ENCODE measurements at regions of chr9 and their contacts with region 1.

Region 1: DNA sequence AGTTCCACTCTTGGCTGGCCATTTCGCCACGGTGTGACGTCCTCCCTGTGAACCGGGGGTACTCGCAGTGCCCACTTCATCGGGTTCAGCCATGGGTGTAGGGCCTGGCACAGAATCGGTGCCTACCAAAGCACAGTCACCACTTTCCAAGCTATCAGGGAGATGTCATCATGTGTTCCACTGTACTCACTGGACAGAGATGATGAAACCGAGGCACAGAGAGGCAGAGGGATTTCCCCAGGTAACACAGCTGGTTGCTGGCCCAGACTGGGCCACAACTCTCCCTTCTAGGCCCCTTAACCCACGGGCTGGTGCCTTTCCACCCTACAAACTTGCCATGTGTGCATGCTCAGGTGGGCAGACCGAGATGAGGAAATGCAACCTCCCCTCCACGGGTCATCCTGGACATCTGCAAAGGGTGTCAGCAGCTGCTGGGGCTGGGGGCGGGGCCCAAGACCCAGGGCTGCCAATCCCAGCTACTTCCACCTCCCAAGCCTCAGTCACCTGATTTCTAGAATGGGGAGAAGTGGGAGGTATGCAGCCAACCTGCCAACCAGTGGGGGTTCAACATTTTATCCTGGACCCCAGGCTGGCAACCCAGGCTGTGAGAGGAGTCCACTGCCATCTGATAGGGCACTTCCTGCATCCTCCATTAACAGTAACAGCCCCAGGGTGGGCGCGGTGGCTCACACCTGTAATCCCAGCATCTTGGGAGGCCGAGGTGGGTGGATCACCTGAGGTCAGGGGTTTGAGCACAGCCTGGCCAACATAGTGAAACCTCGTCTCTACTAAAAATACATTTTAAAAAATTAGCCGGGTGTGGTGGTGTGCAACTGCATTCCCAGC is 893 bp upstream of the SH2D3C start:
- DNase-seq: peak; percentile 80
- ATAC-seq: peak; percentile 50
- H3K4me3 ChIP-seq: peak overlapping the region; percentile 24 to 91 (median 69)
- H3K4me3 Mint-ChIP-seq: peak overlapping the region; percentile 100
- H3K27ac ChIP-seq: peak overlapping the region; percentile 89 to 97
- H3K27ac Mint-ChIP-seq: peak overlapping the region; percentile 97
- H3K4me1 ChIP-seq: peaks cover 43 to 82% of the 10 kb centered on the region in 2 donors
- H3K4me1 Mint-ChIP-seq: peaks cover 66% of the 10 kb centered on the region
- H3K27me3 ChIP-seq: no peaks in the 10 kb centered on the region
- H3K27me3 Mint-ChIP-seq: no peaks in the 10 kb centered on the region
- CTCF ChIP-seq: no peak

Region 2: GRCh38 chr9:127568971-127569885 is 210.1 kb before region 1 on chr9:
- CTCF ChIA-PET with region 1: no interaction called
- POLR2A ChIA-PET with region 1: no interaction called
- intact Hi-C with region 1: loop called (anchors 2 kb)
- DNase-seq: peak; percentile 80
- ATAC-seq: peak; percentile 92
- H3K4me3 ChIP-seq: peak overlapping the region in 4 of 5 experiments; percentile 53 to 72 (median 65)
- H3K4me3 Mint-ChIP-seq: peak overlapping the region; percentile 93
- H3K27ac ChIP-seq: no peak overlapping the region
- H3K27ac Mint-ChIP-seq: peak overlapping the region; percentile 81
- H3K4me1 ChIP-seq: peaks cover 18 to 24% of the 10 kb centered on the region in 2 donors
- H3K4me1 Mint-ChIP-seq: peaks cover 14% of the 10 kb centered on the region
- H3K27me3 ChIP-seq: peaks cover 0 to 7% (median 0%) of the 10 kb centered on the region in 4 experiments
- H3K27me3 Mint-ChIP-seq: no peaks in the 10 kb centered on the region
- CTCF ChIP-seq: no peak